Ascending aorta (tissue), 2 donors: ENCODE measurements at regions of chr2 and their contacts with region 1.

Region 1: GRCh38 chr2:144516981-144517865 is 2.7 kb downstream of the ZEB2 start:
- DNase-seq: peak in 1 of 2 donors; percentile 87
- H3K4me3 ChIP-seq: peak overlapping the region; percentile 85 to 89
- H3K27ac ChIP-seq: peak overlapping the region; percentile 99 to 100
- H3K4me1 ChIP-seq: peaks cover 0 to 5% of the 10 kb centered on the region in 2 donors
- H3K27me3 ChIP-seq: no peaks in the 10 kb centered on the region
- CTCF ChIP-seq: no peak

Region 2: DNA sequence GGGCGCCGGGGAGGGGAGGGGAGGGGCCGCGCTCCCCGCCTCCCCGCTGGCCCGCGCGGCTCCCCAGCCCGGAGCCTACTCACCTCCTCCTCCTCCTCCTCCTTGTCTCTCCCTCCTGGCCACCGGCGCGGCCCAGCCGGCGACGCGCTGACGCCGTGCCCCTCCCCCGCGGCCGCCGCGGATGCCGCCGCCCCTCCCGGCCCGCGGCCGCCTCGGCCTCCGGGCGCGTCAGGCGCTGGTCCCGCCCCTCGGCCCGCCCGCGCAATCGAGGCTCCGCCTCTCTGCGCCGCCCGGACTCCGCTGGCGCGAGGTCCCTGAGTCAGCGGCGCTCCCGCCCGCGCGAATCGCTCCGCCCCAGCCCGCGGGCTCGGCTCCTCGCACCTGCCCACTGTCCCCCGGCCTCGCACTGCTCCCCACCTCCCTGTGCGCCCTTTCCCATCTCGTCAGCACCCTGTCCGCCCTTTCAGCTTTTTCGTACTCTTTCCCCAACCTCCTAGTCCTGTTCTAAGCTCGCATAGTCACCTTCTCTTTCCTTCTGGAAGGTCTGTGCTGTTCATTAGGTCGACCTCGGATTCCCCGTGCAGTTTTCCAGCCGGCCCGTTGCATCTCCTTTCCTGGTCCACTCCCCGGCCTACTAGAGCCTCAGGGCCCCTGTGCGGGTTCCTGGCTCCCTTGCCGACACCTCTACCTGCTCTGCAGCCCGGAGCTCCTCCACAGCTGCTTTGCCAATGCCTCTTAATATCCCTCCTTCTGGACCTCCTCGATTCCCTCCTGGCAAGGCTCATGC is 184.7 kb before region 1 on chr2:
- intact Hi-C with region 1: loop called (anchors 2 kb)
- DNase-seq: peak; percentile 33 to 92
- H3K4me3 ChIP-seq: peak overlapping the region; percentile 66 to 94
- H3K27ac ChIP-seq: peak overlapping the region; percentile 85 to 88
- H3K4me1 ChIP-seq: no peaks in the 10 kb centered on the region
- H3K27me3 ChIP-seq: no peaks in the 10 kb centered on the region
- CTCF ChIP-seq: no peak

Region 3: DNA sequence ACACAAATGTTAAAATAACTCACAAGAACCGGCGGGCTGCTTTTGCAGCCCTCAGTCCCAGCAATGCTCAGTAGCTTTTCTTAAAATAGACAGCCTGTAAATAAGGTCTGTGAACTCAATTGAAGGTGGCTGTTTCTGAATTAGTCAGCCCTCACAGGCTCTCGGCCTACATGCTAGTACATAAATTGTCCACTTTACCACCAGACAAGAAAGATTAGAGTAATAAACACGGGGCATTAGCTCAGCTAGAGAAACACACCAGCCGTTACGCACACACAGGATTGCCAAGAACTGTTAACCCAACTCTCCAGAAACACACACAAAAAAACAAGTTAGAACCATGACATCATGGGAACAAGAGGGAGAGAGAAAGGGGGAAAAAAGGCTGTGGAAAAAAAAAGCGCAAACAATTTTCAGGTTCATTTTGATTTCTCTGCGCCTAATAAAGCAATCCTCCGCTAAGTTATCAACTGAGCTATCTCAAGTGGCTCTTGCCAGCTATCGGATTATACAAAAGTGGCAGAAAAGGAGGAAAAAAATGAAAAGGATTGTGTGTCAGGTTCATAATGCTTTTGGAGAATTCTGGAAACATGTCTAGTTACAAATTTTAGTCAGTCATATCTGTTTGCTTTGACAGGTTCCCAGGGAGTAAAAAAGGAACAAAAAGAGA is 86.4 kb before region 1 on chr2:
- intact Hi-C with region 1: loop called (anchors 2 kb)
- DNase-seq: peak in 1 of 2 donors; percentile 79
- H3K4me3 ChIP-seq: peak overlapping the region; percentile 42 to 60
- H3K27ac ChIP-seq: peak overlapping the region; percentile 73 to 80
- H3K4me1 ChIP-seq: peaks cover 0 to 43% of the 10 kb centered on the region in 2 donors
- H3K27me3 ChIP-seq: no peaks in the 10 kb centered on the region
- CTCF ChIP-seq: no peak

Region 4: DNA sequence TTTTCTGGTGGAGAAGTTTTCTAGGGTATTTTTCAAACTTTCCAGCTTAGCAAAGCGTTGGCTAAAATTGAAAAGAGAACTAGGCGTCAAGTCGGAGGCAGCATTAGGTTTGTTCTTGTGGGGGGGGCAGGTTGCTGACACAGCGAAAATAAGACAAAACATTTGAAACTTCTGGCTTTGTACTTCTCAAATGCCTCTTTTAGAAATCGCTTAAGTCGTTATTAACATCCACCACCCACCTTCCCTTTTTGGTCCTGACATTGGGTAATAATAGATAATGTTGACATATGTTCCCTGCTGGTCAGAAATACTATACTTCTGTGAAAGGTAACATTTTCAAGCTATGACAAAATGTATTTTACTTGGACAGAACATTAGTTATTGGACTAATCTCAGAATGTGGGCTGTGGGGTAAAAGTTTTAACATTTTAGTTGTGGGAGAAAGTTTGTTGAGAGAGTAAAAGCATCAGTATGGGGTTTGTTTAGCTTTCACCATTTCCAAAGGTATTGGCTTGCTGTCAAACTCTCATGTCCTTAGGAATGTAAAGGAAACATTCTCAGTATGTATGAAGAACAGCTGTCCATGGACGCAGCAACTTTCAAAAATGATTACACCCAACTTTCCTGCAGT is 90.8 kb after region 1 on chr2:
- intact Hi-C with region 1: loop called (anchors 5 kb)
- DNase-seq: no peak
- H3K4me3 ChIP-seq: peak overlapping the region in 1 of 2 donors; percentile 25
- H3K27ac ChIP-seq: peak overlapping the region; percentile 51 to 62
- H3K4me1 ChIP-seq: peaks cover 0 to 6% of the 10 kb centered on the region in 2 donors
- H3K27me3 ChIP-seq: no peaks in the 10 kb centered on the region
- CTCF ChIP-seq: no peak

Region 5: GRCh38 chr2:144996225-144996795 is 479.1 kb after region 1 on chr2:
- intact Hi-C with region 1: loop called (anchors 5 kb)
- DNase-seq: no peak
- H3K4me3 ChIP-seq: no peak overlapping the region
- H3K27ac ChIP-seq: peak overlapping the region; percentile 12 to 58
- H3K4me1 ChIP-seq: peaks cover 0 to 17% of the 10 kb centered on the region in 2 donors
- H3K27me3 ChIP-seq: no peaks in the 10 kb centered on the region
- CTCF ChIP-seq: no peak

Region 6: GRCh38 chr2:145752091-145752806 is 1235.0 kb after region 1 on chr2:
- intact Hi-C with region 1: loop called (anchors 5 kb)
- DNase-seq: peak in 1 of 2 donors; percentile 64
- H3K4me3 ChIP-seq: peak overlapping the region in 1 of 2 donors; percentile 26
- H3K27ac ChIP-seq: peak overlapping the region; percentile 51 to 62
- H3K4me1 ChIP-seq: peaks cover 3 to 21% of the 10 kb centered on the region in 2 donors
- H3K27me3 ChIP-seq: no peaks in the 10 kb centered on the region
- CTCF ChIP-seq: peak; percentile 41 to 71 (median 56)